ENCODE measurements at regions of chr11 and their contacts with region 1.

Region 1: DNA sequence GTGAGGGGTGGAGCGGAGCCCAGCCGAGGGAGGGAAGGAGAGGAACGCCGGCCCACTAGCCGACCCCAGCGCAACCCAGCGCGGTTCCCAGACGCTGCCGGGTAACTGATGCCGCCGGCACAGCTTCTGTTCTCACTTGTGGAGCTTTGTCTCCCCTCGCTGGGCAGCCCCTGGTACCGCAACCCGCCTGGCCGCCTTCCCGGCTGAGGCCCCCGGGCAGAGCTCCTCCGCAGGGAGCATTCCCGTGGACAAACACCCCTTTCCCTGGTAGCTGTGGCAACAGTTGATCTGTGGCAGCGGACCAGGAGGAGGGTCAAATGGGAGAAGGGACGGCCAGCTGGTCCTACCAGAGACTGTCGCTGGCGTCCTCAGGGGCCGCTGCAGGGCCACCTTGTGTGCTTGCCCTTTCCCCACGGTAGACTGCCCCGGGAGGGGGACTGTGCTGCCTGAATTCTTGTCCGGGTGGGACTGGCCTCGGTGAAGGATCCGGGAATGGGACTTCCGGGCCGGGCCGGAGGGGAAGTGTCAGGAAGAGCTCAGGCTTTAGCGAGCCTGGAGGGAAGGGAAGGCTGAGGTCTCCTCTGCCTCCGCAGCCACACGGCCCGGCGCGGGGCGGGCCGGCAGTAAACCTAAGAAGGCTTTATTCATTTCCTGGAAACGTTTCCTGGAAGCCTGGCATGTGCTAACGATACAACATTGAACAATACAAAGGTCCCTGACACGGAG is 468.0 kb downstream of the OPCML start:
- DNase-seq: peak; percentile 48
- ATAC-seq: peak; percentile 92
- H3K4me3 ChIP-seq: peak overlapping the region; percentile 44
- H3K27ac ChIP-seq: no peak overlapping the region
- H3K4me1 ChIP-seq: no peaks in the 10 kb centered on the region
- H3K27me3 ChIP-seq: no peaks in the 10 kb centered on the region
- CTCF ChIP-seq: peak; percentile 63
- POLR2A ChIP-seq: no peak
- RAD21 ChIP-seq: peak; percentile 76

Region 2: GRCh38 chr11:131688051-131688698 is 1376.1 kb before region 1 on chr11:
- CTCF ChIA-PET with region 1: no interaction called
- POLR2A ChIA-PET with region 1: no interaction called
- dilution Hi-C with region 1: no loop called
- in situ Hi-C with region 1: no loop called
- intact Hi-C with region 1: loop called (anchors 5 kb)
- DNase-seq: peak; percentile 41
- ATAC-seq: peak; percentile 96
- H3K4me3 ChIP-seq: peak overlapping the region; percentile 36
- H3K27ac ChIP-seq: no peak overlapping the region
- H3K4me1 ChIP-seq: peaks cover 3% of the 10 kb centered on the region; the same call in 1 of the 2 replicates
- H3K27me3 ChIP-seq: peaks cover 17% of the 10 kb centered on the region
- CTCF ChIP-seq: peak; percentile 80
- POLR2A ChIP-seq: no peak
- RAD21 ChIP-seq: peak; percentile 73

Region 3: DNA sequence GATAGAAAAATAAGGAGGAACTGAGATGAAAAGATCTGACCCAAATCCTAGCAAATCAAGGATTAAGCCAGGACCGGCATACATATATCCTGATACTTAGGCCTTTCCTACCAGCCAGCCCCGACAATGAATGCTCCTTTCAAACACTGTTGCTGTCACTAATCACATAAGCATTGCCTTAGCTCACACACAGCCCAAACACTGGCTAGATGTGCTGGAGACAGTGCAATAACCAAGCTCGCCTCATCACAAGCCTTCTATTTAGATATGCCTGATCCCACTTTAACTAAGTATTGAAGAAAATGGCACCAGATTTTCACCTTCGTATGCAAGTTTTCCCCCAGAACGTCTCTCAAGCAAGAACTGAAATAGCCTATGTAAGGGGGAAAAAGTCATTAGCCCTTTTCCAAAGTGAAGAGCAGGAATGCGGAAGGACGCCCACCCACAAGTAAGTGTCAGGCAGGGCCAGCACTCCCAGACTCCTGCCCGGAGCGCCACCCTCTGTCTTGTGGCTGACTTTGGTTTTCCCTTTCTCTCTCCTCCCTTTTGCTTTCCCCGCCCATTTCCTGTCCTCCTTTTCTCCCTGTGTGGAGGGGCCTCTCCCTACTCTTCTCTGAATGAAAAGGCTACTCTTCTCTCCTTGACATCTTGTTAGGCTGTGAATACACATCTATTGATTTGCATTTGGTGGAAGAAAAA is 476.9 kb after region 1 on chr11:
- CTCF ChIA-PET with region 1: no interaction called
- POLR2A ChIA-PET with region 1: no interaction called
- dilution Hi-C with region 1: no loop called
- in situ Hi-C with region 1: no loop called
- intact Hi-C with region 1: no loop called
- DNase-seq: no peak
- ATAC-seq: no peak
- H3K4me3 ChIP-seq: no peak overlapping the region
- H3K27ac ChIP-seq: no peak overlapping the region
- H3K4me1 ChIP-seq: no peaks in the 10 kb centered on the region
- H3K27me3 ChIP-seq: no peaks in the 10 kb centered on the region
- CTCF ChIP-seq: no peak
- POLR2A ChIP-seq: no peak
- RAD21 ChIP-seq: no peak